Mammary epithelial cell (primary cell): ENCODE measurements at regions of chr6 and their contacts with region 1.

Region 1: GRCh38 chr6:39791850-39792539 is at the start of gene DAAM2:
- DNase-seq: no peak
- H3K4me3 ChIP-seq: peak within 1 kb of the TSS in 2 of 3 experiments; percentile 27 to 36
- H3K27ac ChIP-seq: no peak within 1 kb of the TSS
- H3K4me1 ChIP-seq: peaks cover 4% of the 10 kb centered on the region
- H3K27me3 ChIP-seq: peaks cover 10% of the 10 kb centered on the region
- CTCF ChIP-seq: no peak
- total RNA-seq, gene DAAM2: 0.17 TPM in 1 of 2 donors, not detected in the other

Region 2: GRCh38 chr6:39746795-39747194 is 45.2 kb before region 1 on chr6:
- CTCF ChIA-PET with region 1: interaction called, 13 read pairs
- dilution Hi-C with region 1: no loop called
- in situ Hi-C with region 1: no loop called
- intact Hi-C with region 1: no loop called
- DNase-seq: no peak
- H3K4me3 ChIP-seq: no peak overlapping the region
- H3K27ac ChIP-seq: no peak overlapping the region
- H3K4me1 ChIP-seq: no peaks in the 10 kb centered on the region
- H3K27me3 ChIP-seq: no peaks in the 10 kb centered on the region
- CTCF ChIP-seq: no peak